ENCODE measurements at regions of chr4 and their contacts with region 1.

Region 1: GRCh38 chr4:88284439-88285234 is at the start of gene PPM1K:
- DNase-seq: peak; percentile 100
- H3K4me3 ChIP-seq: peak within 1 kb of the TSS; percentile 64 to 74 (median 70)
- H3K27ac ChIP-seq: peak within 1 kb of the TSS; percentile 93 to 99 (median 96)
- H3K4me1 ChIP-seq: peaks cover 0 to 28% (median 12%) of the 10 kb centered on the region in 4 donors
- H3K27me3 ChIP-seq: no peaks in the 10 kb centered on the region
- CTCF ChIP-seq: no peak
- EP300 ChIP-seq: peak in 2 of 4 donors; percentile 26 to 64
- POLR2A ChIP-seq: peak; percentile 82 to 87
- total RNA-seq, gene PPM1K: 12.6 to 16.8 (median 15.4) TPM

Region 2: GRCh38 chr4:88017516-88018297 is 266.9 kb before region 1 on chr4:
- intact Hi-C with region 1: loop called (anchors 5 kb)
- DNase-seq: peak; percentile 71
- H3K4me3 ChIP-seq: no peak overlapping the region
- H3K27ac ChIP-seq: peak overlapping the region; percentile 93 to 97 (median 94)
- H3K4me1 ChIP-seq: peaks cover 3 to 94% (median 90%) of the 10 kb centered on the region in 4 donors
- H3K27me3 ChIP-seq: no peaks in the 10 kb centered on the region
- CTCF ChIP-seq: no peak
- EP300 ChIP-seq: peak; percentile 79 to 89 (median 83)
- POLR2A ChIP-seq: no peak

Region 3: GRCh38 chr4:88378691-88379559 is 94.3 kb after region 1 on chr4 and contains the start of gene HERC6:
- intact Hi-C with region 1: loop called (anchors 5 kb)
- DNase-seq: peak; percentile 89
- H3K4me3 ChIP-seq: peak within 1 kb of the TSS; percentile 88 to 100 (median 98)
- H3K27ac ChIP-seq: peak within 1 kb of the TSS; percentile 89 to 95 (median 92)
- H3K4me1 ChIP-seq: no peaks in the 10 kb centered on the region
- H3K27me3 ChIP-seq: no peaks in the 10 kb centered on the region
- CTCF ChIP-seq: peak; percentile 60 to 87 (median 70)
- EP300 ChIP-seq: no peak
- POLR2A ChIP-seq: no peak
- total RNA-seq, gene HERC6: 5.7 to 8.6 (median 7.4) TPM

Region 4: GRCh38 chr4:88456757-88457306 is 172.2 kb after region 1 on chr4 and contains the start of gene HERC5:
- intact Hi-C with region 1: loop called (anchors 2 kb)
- DNase-seq: peak; percentile 94
- H3K4me3 ChIP-seq: peak within 1 kb of the TSS; percentile 49 to 80 (median 62)
- H3K27ac ChIP-seq: peak within 1 kb of the TSS; percentile 75 to 85 (median 82)
- H3K4me1 ChIP-seq: peaks cover 0 to 9% (median 2%) of the 10 kb centered on the region in 4 donors
- H3K27me3 ChIP-seq: no peaks in the 10 kb centered on the region
- CTCF ChIP-seq: peak; percentile 58 to 67 (median 64)
- EP300 ChIP-seq: peak in 1 of 4 donors; percentile 7
- POLR2A ChIP-seq: peak in 1 of 2 donors; percentile 11
- total RNA-seq, gene HERC5: 4.8 to 7.5 (median 6.0) TPM

Region 5: GRCh38 chr4:88591787-88592599 is 307.4 kb after region 1 on chr4 and contains the start of gene HERC3:
- intact Hi-C with region 1: loop called (anchors 5 kb)
- DNase-seq: peak; percentile 95
- H3K4me3 ChIP-seq: peak within 1 kb of the TSS; percentile 93 to 100 (median 98)
- H3K27ac ChIP-seq: peak within 1 kb of the TSS; percentile 97 to 99 (median 98)
- H3K4me1 ChIP-seq: peaks cover 0 to 28% (median 16%) of the 10 kb centered on the region in 4 donors
- H3K27me3 ChIP-seq: no peaks in the 10 kb centered on the region
- CTCF ChIP-seq: peak in 1 of 4 experiments; percentile 14
- EP300 ChIP-seq: no peak
- POLR2A ChIP-seq: peak; percentile 23 to 24
- total RNA-seq, gene HERC3: 34.6 to 44.9 (median 36.3) TPM